Activated CD4-positive, alpha-beta T cell treated with anti-CD3 and anti-CD28 coated beads for 36 hours (primary cell): ENCODE measurements at regions of chr16 and their contacts with region 1.

Region 1: GRCh38 chr16:28863929-28864793 is 518 bp downstream of the SH2B1 start:
- DNase-seq: peak; percentile 44
- ATAC-seq: no peak
- H3K4me3 Mint-ChIP-seq: peak overlapping the region; percentile 96
- H3K27ac Mint-ChIP-seq: peak overlapping the region; percentile 96
- H3K4me1 Mint-ChIP-seq: peaks cover 21% of the 10 kb centered on the region
- H3K27me3 Mint-ChIP-seq: no peaks in the 10 kb centered on the region

Region 2: GRCh38 chr16:28538733-28539596 is 325.2 kb before region 1 on chr16 and contains the start of gene NUPR1:
- CTCF ChIA-PET with region 1: no interaction called
- POLR2A ChIA-PET with region 1: no interaction called
- intact Hi-C with region 1: no loop called
- DNase-seq: no peak
- ATAC-seq: no peak
- H3K4me3 Mint-ChIP-seq: no peak within 1 kb of the TSS
- H3K27ac Mint-ChIP-seq: no peak within 1 kb of the TSS
- H3K4me1 Mint-ChIP-seq: peaks cover 28% of the 10 kb centered on the region
- H3K27me3 Mint-ChIP-seq: no peaks in the 10 kb centered on the region
- total RNA-seq, gene NUPR1: not detected

Region 3: GRCh38 chr16:28879841-28880588 is 15.9 kb after region 1 on chr16:
- CTCF ChIA-PET with region 1: interaction called, 6 read pairs
- POLR2A ChIA-PET with region 1: interaction called, 5 read pairs
- intact Hi-C with region 1: loop called in 1 of 2 experiments (anchors 1 kb)
- DNase-seq: peak; percentile 97
- ATAC-seq: peak; percentile 97
- H3K4me3 Mint-ChIP-seq: peak overlapping the region; percentile 85
- H3K27ac Mint-ChIP-seq: peak overlapping the region; percentile 76
- H3K4me1 Mint-ChIP-seq: peaks cover 20% of the 10 kb centered on the region
- H3K27me3 Mint-ChIP-seq: peaks cover 7% of the 10 kb centered on the region